ENCODE measurements at regions of chr6 and their contacts with region 1.

Region 1: DNA sequence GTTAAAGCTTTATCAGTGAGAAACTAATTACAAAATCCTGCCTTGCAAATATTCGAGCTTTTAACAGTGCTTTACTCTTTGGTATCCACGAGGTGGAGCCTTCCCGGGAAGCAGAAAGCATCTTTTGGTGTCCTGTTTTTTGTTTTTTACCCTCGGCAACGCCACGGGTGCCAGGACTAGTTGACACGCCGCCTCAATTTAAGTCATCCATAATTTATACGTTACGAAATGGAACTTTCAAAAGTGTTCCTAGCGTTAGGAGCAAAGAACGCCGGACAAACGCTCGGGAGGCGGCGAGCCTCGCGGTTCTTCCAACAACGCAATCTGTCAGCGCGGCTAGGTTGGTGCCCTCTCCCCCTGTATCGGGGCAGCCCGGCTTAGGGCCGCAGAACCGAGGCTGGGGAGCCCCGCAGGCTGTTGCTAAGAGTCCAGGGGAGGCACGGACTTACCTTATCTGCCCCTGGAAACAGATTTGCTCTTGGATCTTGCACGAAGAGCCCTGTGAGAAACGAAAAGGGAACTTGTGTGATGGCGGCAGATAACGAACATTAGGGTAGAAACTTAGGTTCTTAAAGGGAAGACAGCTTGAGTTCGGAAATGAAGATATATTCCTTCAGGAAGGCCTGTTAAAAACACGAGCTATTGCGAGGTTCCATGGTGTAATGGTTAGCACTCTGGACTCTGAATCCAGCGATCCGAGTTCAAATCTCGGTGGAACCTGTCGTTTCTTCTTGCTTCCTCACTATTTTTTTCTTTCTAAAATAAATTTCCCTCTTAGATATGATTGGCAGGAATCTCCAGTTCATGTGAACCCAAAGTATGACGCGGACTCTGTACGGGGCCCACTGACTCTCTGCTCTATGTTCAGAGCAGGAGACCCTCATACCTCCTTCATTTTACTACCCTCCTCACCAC is 46.2 kb upstream of the ZNF184 start:
- DNase-seq: peak; percentile 72
- H3K4me3 Mint-ChIP-seq: peak overlapping the region; percentile 94
- H3K27ac Mint-ChIP-seq: peak overlapping the region; percentile 99
- H3K4me1 Mint-ChIP-seq: peaks cover 9% of the 10 kb centered on the region
- H3K27me3 Mint-ChIP-seq: no peaks in the 10 kb centered on the region
- CTCF ChIP-seq: peak; percentile 60

Region 2: GRCh38 chr6:27049863-27050781 is 469.0 kb before region 1 on chr6:
- CTCF ChIA-PET with region 1: no interaction called
- intact Hi-C with region 1: no loop called
- DNase-seq: no peak
- H3K4me3 Mint-ChIP-seq: no peak overlapping the region
- H3K27ac Mint-ChIP-seq: no peak overlapping the region
- H3K4me1 Mint-ChIP-seq: no peaks in the 10 kb centered on the region
- H3K27me3 Mint-ChIP-seq: no peaks in the 10 kb centered on the region
- CTCF ChIP-seq: no peak

Region 3: DNA sequence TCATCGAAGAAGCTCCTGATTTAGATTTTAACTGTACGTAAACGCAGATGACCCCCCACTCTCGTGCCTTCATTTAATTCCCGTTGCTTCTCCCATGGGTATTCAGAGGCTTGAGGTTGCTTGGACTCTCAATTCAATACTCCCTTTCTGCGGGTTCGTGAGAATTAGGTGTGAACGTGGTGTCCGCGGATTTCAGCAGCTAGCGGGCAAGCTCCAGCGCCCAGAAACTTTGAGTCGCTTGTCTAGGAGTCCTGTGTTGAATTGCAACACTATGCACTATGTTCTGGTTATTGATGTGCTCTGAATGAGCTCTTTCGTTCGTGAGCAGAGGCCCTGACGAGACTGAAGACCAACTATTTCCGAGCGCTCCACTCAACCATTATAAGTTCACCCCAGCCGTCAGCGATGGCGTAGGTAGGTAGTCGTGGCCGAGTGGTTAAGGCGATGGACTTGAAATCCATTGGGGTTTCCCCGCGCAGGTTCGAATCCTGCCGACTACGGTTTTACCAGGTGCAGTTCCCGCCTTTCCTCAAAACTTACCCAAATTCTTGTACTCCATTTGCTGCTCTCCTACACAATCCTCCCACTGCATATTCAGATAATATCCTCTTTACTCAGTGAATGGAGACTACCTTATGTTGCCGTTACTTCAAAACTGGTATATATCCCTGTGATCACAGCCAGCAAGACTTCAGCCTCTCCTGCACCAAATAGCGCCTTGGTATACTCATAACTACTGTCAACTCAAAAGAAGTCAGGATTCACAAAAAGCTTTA is 26.3 kb after region 1 on chr6:
- CTCF ChIA-PET with region 1: interaction called, 12 read pairs
- intact Hi-C with region 1: loop called (anchors 2 kb)
- DNase-seq: peak; percentile 91
- H3K4me3 Mint-ChIP-seq: peak overlapping the region; percentile 76
- H3K27ac Mint-ChIP-seq: peak overlapping the region; percentile 91
- H3K4me1 Mint-ChIP-seq: peaks cover 29% of the 10 kb centered on the region
- H3K27me3 Mint-ChIP-seq: no peaks in the 10 kb centered on the region
- CTCF ChIP-seq: no peak

Region 4: DNA sequence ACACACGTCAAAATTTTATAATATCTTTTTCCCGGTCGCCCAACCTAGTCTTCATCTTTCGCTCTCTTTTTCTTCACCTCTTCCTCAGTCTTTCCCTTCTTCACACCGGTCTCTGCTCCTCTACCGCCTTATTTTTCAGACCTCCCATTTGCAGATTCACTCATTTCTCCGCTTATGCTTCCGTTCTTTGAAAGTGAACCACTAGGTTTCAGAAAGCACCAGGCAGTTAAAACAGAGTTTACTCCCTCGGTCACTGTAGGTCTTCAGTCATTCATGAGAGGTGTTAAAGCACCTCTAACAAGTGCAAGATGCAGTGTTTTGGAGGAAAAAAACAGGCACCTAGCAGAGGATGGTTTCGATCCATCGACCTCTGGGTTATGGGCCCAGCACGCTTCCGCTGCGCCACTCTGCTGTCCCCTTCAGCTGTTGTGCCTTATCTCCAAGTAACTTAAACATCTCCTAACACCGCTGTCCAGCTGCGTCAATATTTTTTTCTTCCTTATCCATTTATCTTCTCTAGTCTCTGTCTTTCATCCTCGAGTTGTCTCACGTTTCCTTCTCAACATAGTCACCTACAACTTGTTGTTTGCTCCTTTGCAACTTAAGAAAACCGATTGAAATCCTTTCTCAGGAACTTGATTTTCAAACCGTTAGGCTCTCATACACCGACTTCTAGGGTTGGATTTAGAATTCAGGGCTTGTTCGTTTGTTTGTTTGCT is 73.5 kb after region 1 on chr6:
- CTCF ChIA-PET with region 1: interaction called, 8 read pairs
- intact Hi-C with region 1: loop called (anchors 1 kb)
- DNase-seq: peak; percentile 80
- H3K4me3 Mint-ChIP-seq: no peak overlapping the region
- H3K27ac Mint-ChIP-seq: no peak overlapping the region
- H3K4me1 Mint-ChIP-seq: no peaks in the 10 kb centered on the region
- H3K27me3 Mint-ChIP-seq: no peaks in the 10 kb centered on the region
- CTCF ChIP-seq: no peak

Region 5: DNA sequence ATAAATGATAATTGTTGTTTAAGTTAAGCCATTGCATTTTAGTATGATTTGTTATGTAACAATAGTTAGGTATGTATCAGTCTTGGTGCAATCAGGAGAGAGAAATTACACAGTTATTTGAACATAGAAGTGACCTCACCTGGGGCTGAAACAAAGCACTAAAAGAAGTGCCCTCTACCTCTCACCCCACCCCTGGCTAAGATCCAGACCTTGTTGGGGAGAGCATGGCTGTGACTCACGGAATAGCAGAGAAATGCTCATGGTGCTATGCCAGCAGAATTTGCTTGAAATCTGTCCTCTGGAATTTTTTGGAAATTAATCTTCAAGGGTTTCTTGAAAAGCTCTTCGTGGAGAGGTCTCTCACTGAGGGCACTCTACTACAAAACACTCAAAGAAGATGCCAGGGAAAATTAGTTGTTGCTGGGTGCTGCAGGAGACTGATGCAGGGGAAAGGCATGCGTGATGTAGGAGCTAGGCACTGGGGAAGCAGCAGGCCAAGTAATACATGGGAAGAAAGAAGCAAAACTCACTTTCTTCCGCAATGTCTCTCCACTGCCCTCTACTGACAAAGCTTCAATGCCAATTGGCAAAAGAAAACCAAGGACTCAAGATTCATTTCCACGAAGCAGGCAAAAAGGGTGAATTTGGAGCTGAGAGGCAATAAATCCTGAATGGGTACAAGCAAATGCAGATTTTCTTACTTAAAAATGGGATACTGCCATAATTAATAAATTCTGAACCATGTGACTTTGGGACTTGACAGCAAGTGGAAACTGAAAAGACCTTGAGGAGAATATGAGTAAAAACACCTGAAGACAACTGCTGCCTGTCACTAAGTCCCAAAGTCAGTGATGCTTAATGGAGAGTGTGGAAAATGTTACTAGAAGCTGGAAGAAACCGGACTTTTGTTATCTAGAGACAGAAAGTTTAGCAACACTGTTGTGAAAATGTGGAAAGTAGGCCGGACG is 90.1 kb after region 1 on chr6:
- CTCF ChIA-PET with region 1: interaction called, 30 read pairs
- intact Hi-C with region 1: loop called (anchors 1 kb)
- DNase-seq: peak; percentile 78
- H3K4me3 Mint-ChIP-seq: no peak overlapping the region
- H3K27ac Mint-ChIP-seq: peak overlapping the region; percentile 57
- H3K4me1 Mint-ChIP-seq: peaks cover 28% of the 10 kb centered on the region
- H3K27me3 Mint-ChIP-seq: no peaks in the 10 kb centered on the region
- CTCF ChIP-seq: peak; percentile 83

Region 6: DNA sequence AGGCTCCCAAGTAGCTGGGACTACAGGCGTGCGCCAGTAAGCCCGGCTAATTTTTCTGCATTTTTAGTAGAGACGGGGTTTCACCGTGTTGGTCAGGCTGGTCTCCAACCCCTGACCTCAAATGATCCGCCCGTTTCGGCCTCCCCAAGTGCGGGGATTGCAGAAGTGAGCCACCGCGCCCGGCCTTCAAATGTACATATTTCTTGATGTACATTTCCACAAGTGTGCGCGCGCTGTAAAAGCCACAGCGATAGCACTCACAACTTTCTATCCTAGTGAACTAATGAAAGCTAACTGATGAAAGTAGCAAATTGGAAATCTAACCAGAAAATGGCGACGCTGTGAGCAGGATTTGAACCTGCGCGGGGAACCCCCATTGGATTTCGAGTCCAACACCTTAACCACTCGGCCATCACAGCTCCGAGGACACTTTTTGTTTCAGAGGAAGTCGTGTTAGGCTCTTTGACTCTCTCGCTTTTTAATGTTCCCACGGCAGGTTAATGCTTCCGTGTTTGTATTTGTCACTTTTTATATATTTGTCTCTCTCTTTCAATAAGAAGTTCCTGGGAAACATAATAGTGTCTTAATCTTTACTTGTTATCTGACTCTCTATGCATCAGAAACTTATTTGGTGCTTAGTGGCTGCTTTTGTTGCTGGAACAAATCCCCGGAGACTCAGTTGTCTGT is 153.1 kb after region 1 on chr6:
- CTCF ChIA-PET with region 1: interaction called, 4 read pairs
- intact Hi-C with region 1: loop called (anchors 1 kb)
- DNase-seq: peak; percentile 85
- H3K4me3 Mint-ChIP-seq: peak overlapping the region; percentile 60
- H3K27ac Mint-ChIP-seq: peak overlapping the region; percentile 78
- H3K4me1 Mint-ChIP-seq: peaks cover 36% of the 10 kb centered on the region
- H3K27me3 Mint-ChIP-seq: no peaks in the 10 kb centered on the region
- CTCF ChIP-seq: no peak

Region 7: DNA sequence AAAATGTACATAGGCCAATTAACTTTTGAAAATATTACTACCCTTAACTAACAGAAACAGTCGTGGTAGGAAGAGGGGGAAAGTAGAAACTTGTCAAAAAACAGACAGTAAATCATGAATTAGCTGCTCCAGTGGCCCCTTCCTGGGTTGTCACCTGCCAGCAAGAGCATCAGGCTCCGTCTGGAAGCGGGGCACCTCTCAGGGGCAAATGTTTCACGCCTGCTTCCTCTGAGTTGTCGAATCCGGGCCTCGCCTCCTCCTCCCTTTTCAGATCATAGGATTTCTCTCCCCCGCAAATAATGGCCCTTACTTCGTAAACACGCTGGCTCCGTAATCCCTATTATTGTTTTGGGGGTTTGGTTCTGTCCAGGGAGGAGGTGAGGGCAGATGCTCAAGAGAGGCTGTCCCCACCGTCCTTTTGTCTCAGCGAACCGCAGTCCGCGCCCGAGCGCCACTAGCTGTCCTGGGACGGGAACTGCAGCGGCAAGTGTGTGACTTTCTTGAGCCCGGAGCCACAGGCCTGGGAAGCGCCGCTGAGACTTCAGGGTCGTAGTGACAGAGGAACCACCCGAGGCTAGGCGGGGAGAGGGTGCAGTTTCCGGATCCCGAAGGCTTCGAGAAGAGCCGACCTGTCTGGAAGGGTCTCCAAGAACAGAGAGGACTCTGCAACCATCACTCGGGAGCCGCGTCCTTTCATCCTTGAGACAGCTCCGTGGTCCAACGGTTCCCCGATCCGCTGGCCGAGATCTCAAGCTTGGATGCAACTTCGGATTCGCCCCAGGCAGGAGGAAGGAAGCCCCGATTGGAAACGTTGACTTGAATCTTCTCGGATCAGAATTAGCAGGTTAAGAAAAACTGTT is 168.2 kb after region 1 on chr6:
- CTCF ChIA-PET with region 1: interaction called, 5 read pairs
- intact Hi-C with region 1: loop called (anchors 5 kb)
- DNase-seq: peak; percentile 92
- H3K4me3 Mint-ChIP-seq: peak overlapping the region; percentile 84
- H3K27ac Mint-ChIP-seq: peak overlapping the region; percentile 84
- H3K4me1 Mint-ChIP-seq: peaks cover 14% of the 10 kb centered on the region
- H3K27me3 Mint-ChIP-seq: no peaks in the 10 kb centered on the region
- CTCF ChIP-seq: peak; percentile 87